Tibial artery (tissue), 4 donors: ENCODE measurements at regions of chr7 and their contacts with region 1.

Region 1: GRCh38 chr7:137661634-137662033 is 185.1 kb downstream of the DGKI start:
- DNase-seq: no peak
- H3K4me3 ChIP-seq: no peak overlapping the region
- H3K27ac ChIP-seq: no peak overlapping the region
- H3K4me1 ChIP-seq: peaks cover 0 to 9% (median 0%) of the 10 kb centered on the region in 4 donors
- H3K27me3 ChIP-seq: no peaks in the 10 kb centered on the region
- CTCF ChIP-seq: no peak

Region 2: GRCh38 chr7:138014686-138015085 is 353.1 kb after region 1 on chr7:
- intact Hi-C with region 1: loop called (anchors 5 kb)
- DNase-seq: no peak
- H3K4me3 ChIP-seq: no peak overlapping the region
- H3K27ac ChIP-seq: no peak overlapping the region
- H3K4me1 ChIP-seq: no peaks in the 10 kb centered on the region
- H3K27me3 ChIP-seq: peaks cover 0 to 3% of the 10 kb centered on the region in 2 donors
- CTCF ChIP-seq: no peak